CD14-positive monocyte (primary cell): ENCODE measurements at regions of chr12 and their contacts with region 1.

Region 1: GRCh38 chr12:47715393-47715876 is 9.6 kb upstream of the RPAP3 start:
- DNase-seq: peak; percentile 75 to 91 (median 84)
- H3K4me3 ChIP-seq: peak overlapping the region in 1 of 3 experiments; percentile 12
- H3K4me3 Mint-ChIP-seq: peak overlapping the region in 1 of 2 donors; percentile 39
- H3K27ac ChIP-seq: no peak overlapping the region
- H3K27ac Mint-ChIP-seq: peak overlapping the region; percentile 21 to 88 (median 81)
- H3K4me1 ChIP-seq: peaks cover 38 to 41% of the 10 kb centered on the region in 2 donors
- H3K4me1 Mint-ChIP-seq: peaks cover 50% of the 10 kb centered on the region
- H3K27me3 ChIP-seq: no peaks in the 10 kb centered on the region
- H3K27me3 Mint-ChIP-seq: peaks cover 2 to 7% (median 4%) of the 10 kb centered on the region in 3 donors
- CTCF ChIP-seq: peak; percentile 80

Region 2: DNA sequence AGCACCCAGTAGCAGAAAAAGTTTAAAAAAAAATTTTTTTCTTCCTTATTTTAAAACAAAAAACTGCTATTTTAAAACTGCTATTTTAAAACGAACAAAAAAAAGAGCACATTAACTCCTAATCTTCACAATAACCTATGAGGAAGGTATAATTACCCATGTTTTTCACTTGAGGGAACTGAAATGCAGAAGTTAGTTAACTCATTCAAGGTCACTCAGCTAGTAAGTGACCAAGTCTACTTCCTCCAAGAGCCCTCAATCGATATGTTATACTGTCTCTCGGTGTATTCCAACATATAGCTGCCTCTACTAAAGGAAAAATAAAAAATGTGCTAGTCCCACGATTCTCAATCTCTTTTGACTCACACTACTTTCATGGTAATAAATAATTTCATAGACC is 17.4 kb before region 1 on chr12:
- intact Hi-C with region 1: no loop called
- DNase-seq: peak in 2 of 3 donors; percentile 48 to 59
- H3K4me3 ChIP-seq: peak overlapping the region in 1 of 3 experiments; percentile 19
- H3K4me3 Mint-ChIP-seq: no peak overlapping the region
- H3K27ac ChIP-seq: peak overlapping the region in 1 of 2 donors; percentile 32
- H3K27ac Mint-ChIP-seq: peak overlapping the region in 3 of 7 donors; percentile 31 to 57 (median 52)
- H3K4me1 ChIP-seq: peaks cover 8 to 10% of the 10 kb centered on the region in 2 donors
- H3K4me1 Mint-ChIP-seq: peaks cover 11% of the 10 kb centered on the region
- H3K27me3 ChIP-seq: no peaks in the 10 kb centered on the region
- H3K27me3 Mint-ChIP-seq: no peaks in the 10 kb centered on the region
- CTCF ChIP-seq: no peak

Region 3: GRCh38 chr12:47949441-47950308 is 234.2 kb after region 1 on chr12:
- intact Hi-C with region 1: loop called (anchors 10 kb)
- DNase-seq: peak; percentile 51 to 70 (median 60)
- H3K4me3 ChIP-seq: no peak overlapping the region
- H3K4me3 Mint-ChIP-seq: no peak overlapping the region
- H3K27ac ChIP-seq: no peak overlapping the region
- H3K27ac Mint-ChIP-seq: no peak overlapping the region
- H3K4me1 ChIP-seq: peaks cover 12 to 14% of the 10 kb centered on the region in 2 donors
- H3K4me1 Mint-ChIP-seq: peaks cover 20% of the 10 kb centered on the region
- H3K27me3 ChIP-seq: no peaks in the 10 kb centered on the region
- H3K27me3 Mint-ChIP-seq: peaks cover 1 to 8% (median 4%) of the 10 kb centered on the region in 3 donors
- CTCF ChIP-seq: peak; percentile 94

Region 4: GRCh38 chr12:48388430-48388829 is 673.0 kb after region 1 on chr12:
- intact Hi-C with region 1: no loop called
- DNase-seq: no peak
- H3K4me3 ChIP-seq: no peak overlapping the region
- H3K4me3 Mint-ChIP-seq: no peak overlapping the region
- H3K27ac ChIP-seq: no peak overlapping the region
- H3K27ac Mint-ChIP-seq: no peak overlapping the region
- H3K4me1 ChIP-seq: no peaks in the 10 kb centered on the region
- H3K4me1 Mint-ChIP-seq: no peaks in the 10 kb centered on the region
- H3K27me3 ChIP-seq: peaks cover 3 to 6% of the 10 kb centered on the region in 2 donors
- H3K27me3 Mint-ChIP-seq: peaks cover 3 to 25% (median 13%) of the 10 kb centered on the region in 3 donors
- CTCF ChIP-seq: no peak